Activated T-helper 1 cell treated with anti-CD3 and anti-CD28 coated beads, Interleukin-12 subunit alpha, Interleukin-12 subunit beta, Interleukin-2, Interleukin-4 antibody, amounts not matched to agents 30 ng/mL and 10 ng/mL and 1 ng/mL, durations not matched to agents 14 hours and 24 hours and 36 hours (primary cell): ENCODE measurements at regions of chr17 and their contacts with region 1.

Region 1: GRCh38 chr17:45828628-45829027 is 16.1 kb upstream of the SPPL2C start:
- DNase-seq: no peak
- H3K4me3 Mint-ChIP-seq: no peak overlapping the region
- H3K27ac Mint-ChIP-seq: no peak overlapping the region
- H3K4me1 Mint-ChIP-seq: no peaks in the 10 kb centered on the region
- H3K27me3 Mint-ChIP-seq: peaks cover 12% of the 10 kb centered on the region

Region 2: DNA sequence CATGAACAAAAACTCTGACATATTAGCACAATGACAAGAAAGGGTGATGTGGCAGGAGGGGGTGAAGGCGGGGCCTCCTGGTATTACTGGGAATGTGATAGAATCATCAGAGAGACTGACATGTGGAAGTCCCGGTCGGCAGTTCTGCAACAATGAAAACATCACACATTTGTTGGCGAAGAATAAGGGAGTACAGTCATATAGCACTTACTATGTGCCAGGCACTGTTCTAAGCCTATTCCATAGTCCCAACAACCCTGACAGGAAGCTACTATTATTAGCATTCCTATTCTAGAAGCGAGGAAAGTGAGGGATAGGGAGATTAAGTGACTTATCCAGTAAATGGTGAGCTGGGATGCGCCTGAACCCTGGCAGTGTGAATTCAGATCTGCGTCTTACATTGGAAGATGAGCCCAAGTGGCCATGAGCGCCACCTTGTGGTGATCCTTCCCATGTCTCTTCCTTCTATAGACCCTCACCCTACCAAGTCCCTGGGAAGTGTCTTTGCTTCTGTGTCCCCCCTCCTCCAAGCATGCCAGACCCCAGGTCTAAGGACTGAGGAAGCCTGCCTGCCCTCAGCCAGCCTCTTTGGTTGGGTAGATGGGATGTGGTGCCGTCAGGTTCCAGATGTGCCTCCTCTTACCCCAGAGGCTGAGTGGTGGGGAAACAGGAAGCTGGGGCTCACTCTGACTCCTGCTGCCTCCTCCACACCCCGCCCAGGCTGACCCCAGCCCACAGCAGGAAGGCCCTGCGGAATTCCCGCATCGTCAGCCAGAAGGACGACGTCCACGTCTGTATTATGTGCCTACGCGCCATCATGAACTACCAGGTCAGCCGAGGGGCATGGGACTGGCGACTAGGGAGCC is 593.0 kb before region 1 on chr17:
- intact Hi-C with region 1: no loop called
- DNase-seq: no peak
- H3K4me3 Mint-ChIP-seq: peak overlapping the region; percentile 28
- H3K27ac Mint-ChIP-seq: peak overlapping the region; percentile 38
- H3K4me1 Mint-ChIP-seq: peaks cover 77% of the 10 kb centered on the region
- H3K27me3 Mint-ChIP-seq: no peaks in the 10 kb centered on the region

Region 3: GRCh38 chr17:45640141-45640850 is 188.3 kb before region 1 on chr17:
- intact Hi-C with region 1: loop called (anchors 1 kb)
- DNase-seq: peak; percentile 47
- H3K4me3 Mint-ChIP-seq: no peak overlapping the region
- H3K27ac Mint-ChIP-seq: no peak overlapping the region
- H3K4me1 Mint-ChIP-seq: peaks cover 5% of the 10 kb centered on the region
- H3K27me3 Mint-ChIP-seq: no peaks in the 10 kb centered on the region

Region 4: DNA sequence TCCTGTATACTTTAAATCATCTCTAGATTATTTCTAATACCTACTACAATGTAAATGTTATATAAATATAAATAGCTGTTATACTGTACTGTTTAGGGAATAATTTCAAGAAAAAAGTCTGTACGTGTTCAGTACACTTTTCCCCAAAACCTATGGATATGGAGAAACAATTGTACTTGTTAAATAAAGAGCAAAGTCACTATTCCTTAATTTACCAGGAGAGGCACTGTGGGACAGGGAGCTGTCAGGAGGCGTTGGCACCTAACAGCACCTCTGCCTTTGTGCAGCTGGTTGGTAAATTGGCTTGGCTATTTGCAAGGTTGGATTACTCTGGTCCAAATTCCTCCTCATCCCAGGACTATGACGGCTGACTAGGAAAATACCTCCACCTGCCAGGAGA is 16.5 kb before region 1 on chr17:
- intact Hi-C with region 1: no loop called
- DNase-seq: no peak
- H3K4me3 Mint-ChIP-seq: no peak overlapping the region
- H3K27ac Mint-ChIP-seq: no peak overlapping the region
- H3K4me1 Mint-ChIP-seq: no peaks in the 10 kb centered on the region
- H3K27me3 Mint-ChIP-seq: no peaks in the 10 kb centered on the region

Region 5: DNA sequence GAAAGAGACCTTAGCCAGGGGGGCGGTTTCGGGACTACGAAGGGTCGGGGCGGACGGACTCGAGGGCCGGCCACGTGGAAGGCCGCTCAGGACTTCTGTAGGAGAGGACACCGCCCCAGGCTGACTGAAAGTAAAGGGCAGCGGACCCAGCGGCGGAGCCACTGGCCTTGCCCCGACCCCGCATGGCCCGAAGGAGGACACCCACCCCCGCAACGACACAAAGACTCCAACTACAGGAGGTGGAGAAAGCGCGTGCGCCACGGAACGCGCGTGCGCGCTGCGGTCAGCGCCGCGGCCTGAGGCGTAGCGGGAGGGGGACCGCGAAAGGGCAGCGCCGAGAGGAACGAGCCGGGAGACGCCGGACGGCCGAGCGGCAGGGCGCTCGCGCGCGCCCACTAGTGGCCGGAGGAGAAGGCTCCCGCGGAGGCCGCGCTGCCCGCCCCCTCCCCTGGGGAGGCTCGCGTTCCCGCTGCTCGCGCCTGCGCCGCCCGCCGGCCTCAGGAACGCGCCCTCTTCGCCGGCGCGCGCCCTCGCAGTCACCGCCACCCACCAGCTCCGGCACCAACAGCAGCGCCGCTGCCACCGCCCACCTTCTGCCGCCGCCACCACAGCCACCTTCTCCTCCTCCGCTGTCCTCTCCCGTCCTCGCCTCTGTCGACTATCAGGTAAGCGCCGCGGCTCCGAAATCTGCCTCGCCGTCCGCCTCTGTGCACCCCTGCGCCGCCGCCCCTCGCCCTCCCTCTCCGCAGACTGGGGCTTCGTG is 65.6 kb after region 1 on chr17 and contains the start of gene MAPT:
- intact Hi-C with region 1: no loop called
- DNase-seq: peak; percentile 77
- H3K4me3 Mint-ChIP-seq: peak within 1 kb of the TSS; percentile 74
- H3K27ac Mint-ChIP-seq: peak within 1 kb of the TSS; percentile 61
- H3K4me1 Mint-ChIP-seq: peaks cover 5% of the 10 kb centered on the region
- H3K27me3 Mint-ChIP-seq: peaks cover 57% of the 10 kb centered on the region
- total RNA-seq, gene MAPT: 0.64 and 1.1 TPM in 2 replicates